Activated CD4-positive, alpha-beta memory T cell treated with anti-CD3 and anti-CD28 coated beads, Interleukin-2, amount 10 ng/mL, durations not matched to agents 7 days and 5 days (primary cell): ENCODE measurements at regions of chr13 and their contacts with region 1.

Region 1: GRCh38 chr13:36736119-36736726 is 62.4 kb downstream of the SERTM1 start:
- DNase-seq: peak; percentile 29
- H3K4me3 Mint-ChIP-seq: no peak overlapping the region
- H3K27ac Mint-ChIP-seq: no peak overlapping the region
- H3K4me1 Mint-ChIP-seq: no peaks in the 10 kb centered on the region
- H3K27me3 Mint-ChIP-seq: peaks cover 7% of the 10 kb centered on the region

Region 2: DNA sequence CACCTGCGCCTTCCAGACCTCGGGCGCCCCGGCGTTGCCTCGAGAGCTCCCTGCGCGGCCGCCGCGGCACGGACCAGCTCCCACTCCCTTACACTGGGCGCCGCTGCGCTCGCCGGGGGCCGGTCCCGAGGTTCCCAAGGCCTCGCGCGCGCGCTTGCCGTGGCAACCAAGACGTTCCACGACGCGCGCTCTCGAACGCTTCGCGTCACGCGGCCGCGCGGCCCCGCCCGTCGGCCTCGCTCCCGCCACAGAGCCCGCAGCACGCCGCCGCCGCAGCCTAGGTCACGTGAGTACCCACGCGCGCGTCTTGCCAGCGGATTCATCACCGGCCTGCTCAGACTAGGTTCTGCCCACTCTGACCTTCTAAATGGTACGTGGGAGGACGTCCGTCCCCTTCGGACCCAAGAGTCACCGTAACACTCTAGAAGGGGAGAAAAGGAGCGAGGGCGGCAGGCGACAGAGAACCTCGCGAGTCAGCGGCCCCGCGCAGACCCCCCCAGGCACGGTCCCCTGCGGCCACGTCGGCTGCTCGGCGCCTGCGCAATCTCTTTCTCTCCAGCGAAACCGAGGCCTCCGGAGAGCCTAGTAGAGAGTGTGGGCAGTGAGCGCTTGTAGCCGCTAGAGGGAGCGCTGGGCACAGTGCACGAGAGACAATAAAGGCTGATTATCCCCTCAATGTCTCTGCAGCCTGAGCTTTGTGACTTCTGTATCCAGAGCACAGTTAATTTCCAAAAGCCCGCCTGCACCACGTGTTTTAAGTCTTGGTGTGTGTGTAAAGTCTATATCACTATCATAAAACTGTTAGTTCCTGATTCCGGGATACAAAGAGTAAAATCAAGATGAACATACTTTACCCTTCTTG is 389.8 kb before region 1 on chr13 and contains the start of gene SPART:
- CTCF ChIA-PET with region 1: interaction called, 28 read pairs
- POLR2A ChIA-PET with region 1: no interaction called
- DNase-seq: peak; percentile 89
- H3K4me3 Mint-ChIP-seq: peak within 1 kb of the TSS; percentile 88
- H3K27ac Mint-ChIP-seq: peak within 1 kb of the TSS; percentile 91
- H3K4me1 Mint-ChIP-seq: peaks cover 27% of the 10 kb centered on the region
- H3K27me3 Mint-ChIP-seq: peaks cover 13% of the 10 kb centered on the region
- total RNA-seq, gene SPART: 23.6 to 24.0 TPM